CD4-positive, alpha-beta memory T cell (primary cell): ENCODE measurements at regions of chr19 and their contacts with region 1.

Region 1: DNA sequence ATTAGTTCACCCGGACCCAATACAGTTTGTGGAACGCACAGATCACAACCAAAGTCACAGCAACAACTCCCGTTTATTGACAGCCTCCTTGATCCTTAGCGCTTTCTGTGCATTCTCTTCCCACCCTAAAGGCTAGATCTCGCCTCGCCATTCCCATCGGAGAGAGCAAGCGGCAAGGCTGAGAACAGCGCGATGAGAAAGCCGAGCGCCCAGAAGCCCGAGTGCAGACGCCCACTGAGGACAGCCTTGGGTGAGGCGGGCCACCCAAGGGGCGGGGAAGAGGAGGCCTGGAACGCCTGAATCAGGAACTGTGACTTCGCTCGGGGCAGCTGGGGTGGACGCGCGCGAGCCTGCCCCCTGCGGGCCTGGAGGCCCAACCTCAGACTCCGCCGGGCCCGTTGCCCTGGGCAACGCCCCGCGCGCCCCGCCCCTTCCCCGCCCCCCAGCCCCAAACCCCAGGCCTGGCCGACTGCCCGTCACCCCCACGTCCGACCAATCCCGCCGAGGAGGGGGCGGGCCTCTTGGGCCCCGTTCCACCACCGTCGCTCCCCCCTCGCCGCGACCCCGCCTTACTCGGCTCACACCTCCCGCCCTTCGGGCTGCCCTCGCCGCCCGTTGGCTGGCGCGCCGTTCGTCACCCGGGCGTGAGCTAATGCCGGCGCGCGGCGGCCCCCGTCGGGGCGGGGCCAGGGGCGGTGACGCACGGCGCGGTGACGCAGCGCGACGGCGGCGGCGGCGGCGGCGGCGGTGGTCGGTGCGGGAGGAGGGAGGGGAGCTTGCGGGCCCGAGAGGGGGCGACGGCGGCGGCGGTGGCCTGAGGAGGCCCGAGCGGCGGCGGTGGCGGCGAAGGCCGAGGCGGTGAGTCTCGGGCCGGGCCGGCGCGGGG is at the start of gene SAMD4B:
- DNase-seq: peak; percentile 99 to 100 (median 99)
- H3K4me3 ChIP-seq: peak within 1 kb of the TSS; percentile 86 to 91
- H3K4me3 Mint-ChIP-seq: peak within 1 kb of the TSS; percentile 87 to 99 (median 94)
- H3K27ac ChIP-seq: peak within 1 kb of the TSS; percentile 78
- H3K27ac Mint-ChIP-seq: peak within 1 kb of the TSS; percentile 91 to 98 (median 95)
- H3K4me1 ChIP-seq: peaks cover 64% of the 10 kb centered on the region
- H3K4me1 Mint-ChIP-seq: peaks cover 50 to 77% (median 64%) of the 10 kb centered on the region in 4 donors
- H3K27me3 ChIP-seq: no peaks in the 10 kb centered on the region
- H3K27me3 Mint-ChIP-seq: no peaks in the 10 kb centered on the region
- total RNA-seq, gene SAMD4B: 65.0 to 79.6 TPM

Region 2: DNA sequence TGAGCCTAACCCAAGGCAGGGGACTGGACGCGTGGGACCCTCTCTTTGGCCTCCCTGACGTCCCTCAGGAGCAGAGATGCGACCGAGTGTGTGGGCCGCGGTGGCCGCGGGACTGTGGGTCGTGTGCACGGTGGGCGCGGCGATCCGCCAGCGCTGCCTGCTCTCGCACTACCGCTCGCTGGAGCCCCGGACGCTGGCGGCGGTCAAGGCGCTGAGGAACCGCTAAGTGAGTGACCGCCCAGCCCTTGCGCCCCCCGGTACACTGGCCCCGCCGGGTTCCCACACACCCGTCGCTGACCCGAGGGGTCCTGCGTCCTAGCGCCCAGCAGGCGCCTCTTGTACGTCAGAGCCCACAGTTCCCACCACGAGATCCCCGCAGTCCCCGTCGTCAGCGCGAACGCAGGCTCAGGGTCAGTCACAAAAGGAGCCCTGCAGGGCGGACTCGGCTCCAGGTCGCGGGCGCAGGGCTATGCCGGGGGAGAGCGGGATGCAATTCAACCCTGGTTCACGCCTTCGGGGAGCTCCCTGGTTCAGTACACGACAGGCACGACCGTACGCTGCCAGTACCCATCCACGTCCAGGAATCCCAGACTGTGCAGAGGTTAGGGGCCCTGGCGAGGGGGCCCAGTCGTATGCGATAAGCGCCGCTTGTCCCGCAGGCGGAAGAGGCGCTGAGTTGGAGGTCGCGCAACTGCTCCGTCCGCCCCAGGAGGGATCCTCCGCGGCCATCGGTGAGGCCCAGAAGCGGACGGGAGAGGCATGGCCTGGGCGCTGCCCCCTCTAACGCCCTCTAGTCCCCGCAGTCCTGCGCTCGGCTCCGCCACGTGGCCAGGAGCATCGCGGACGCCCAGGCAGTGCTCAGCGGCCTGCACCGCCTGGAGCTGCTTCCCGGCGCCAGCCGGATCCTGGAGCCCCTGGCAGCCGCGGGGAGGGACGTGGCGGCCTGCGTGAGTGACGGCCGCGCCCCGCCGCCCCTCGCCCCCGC is 77.4 kb before region 1 on chr19:
- CTCF ChIA-PET with region 1: no interaction called
- POLR2A ChIA-PET with region 1: no interaction called
- intact Hi-C with region 1: no loop called
- DNase-seq: no peak
- H3K4me3 ChIP-seq: no peak overlapping the region
- H3K4me3 Mint-ChIP-seq: peak overlapping the region in 1 of 8 donors; percentile 13
- H3K27ac ChIP-seq: no peak overlapping the region
- H3K27ac Mint-ChIP-seq: no peak overlapping the region
- H3K4me1 ChIP-seq: no peaks in the 10 kb centered on the region
- H3K4me1 Mint-ChIP-seq: peaks cover 3 to 8% (median 5%) of the 10 kb centered on the region in 4 donors
- H3K27me3 ChIP-seq: peaks cover 18% of the 10 kb centered on the region
- H3K27me3 Mint-ChIP-seq: peaks cover 21 to 24% of the 10 kb centered on the region in 2 donors

Region 3: GRCh38 chr19:39390755-39391592 is 49.0 kb after region 1 on chr19 and contains the starts of genes MED29 and PAF1:
- CTCF ChIA-PET with region 1: no interaction called
- POLR2A ChIA-PET with region 1: interaction called, 25 read pairs
- intact Hi-C with region 1: loop called (anchors 1 kb)
- DNase-seq: peak; percentile 96 to 99 (median 99)
- H3K4me3 ChIP-seq: peak within 1 kb of the TSS; percentile 71 to 93
- H3K4me3 Mint-ChIP-seq: peak within 1 kb of the TSS; percentile 90 to 99 (median 98)
- H3K27ac ChIP-seq: peak within 1 kb of the TSS; percentile 99
- H3K27ac Mint-ChIP-seq: peak within 1 kb of the TSS; percentile 93 to 100 (median 100)
- H3K4me1 ChIP-seq: peaks cover 26% of the 10 kb centered on the region
- H3K4me1 Mint-ChIP-seq: peaks cover 22 to 46% (median 33%) of the 10 kb centered on the region in 4 donors
- H3K27me3 ChIP-seq: no peaks in the 10 kb centered on the region
- H3K27me3 Mint-ChIP-seq: no peaks in the 10 kb centered on the region
- total RNA-seq, gene MED29: 43.1 to 51.3 TPM
- total RNA-seq, gene PAF1: 49.2 to 53.8 TPM

Region 4: GRCh38 chr19:39397360-39398296 is 55.7 kb after region 1 on chr19:
- CTCF ChIA-PET with region 1: no interaction called
- POLR2A ChIA-PET with region 1: interaction called, 13 read pairs
- intact Hi-C with region 1: no loop called
- DNase-seq: peak; percentile 90 to 91 (median 91)
- H3K4me3 ChIP-seq: peak overlapping the region in 1 of 2 donors; percentile 21
- H3K4me3 Mint-ChIP-seq: peak overlapping the region; percentile 57 to 70 (median 64)
- H3K27ac ChIP-seq: peak overlapping the region; percentile 72
- H3K27ac Mint-ChIP-seq: peak overlapping the region; percentile 94 to 100 (median 97)
- H3K4me1 ChIP-seq: peaks cover 58% of the 10 kb centered on the region
- H3K4me1 Mint-ChIP-seq: peaks cover 32 to 67% (median 53%) of the 10 kb centered on the region in 4 donors
- H3K27me3 ChIP-seq: no peaks in the 10 kb centered on the region
- H3K27me3 Mint-ChIP-seq: no peaks in the 10 kb centered on the region

Region 5: GRCh38 chr19:39406656-39407393 is 64.9 kb after region 1 on chr19 and contains the start of gene ZFP36:
- CTCF ChIA-PET with region 1: interaction called, 4 read pairs
- POLR2A ChIA-PET with region 1: interaction called, 19 read pairs
- intact Hi-C with region 1: loop called (anchors 1 kb)
- DNase-seq: peak; percentile 86 to 88 (median 87)
- H3K4me3 ChIP-seq: peak within 1 kb of the TSS; percentile 97 to 100
- H3K4me3 Mint-ChIP-seq: peak within 1 kb of the TSS; percentile 88 to 99 (median 97)
- H3K27ac ChIP-seq: peak within 1 kb of the TSS; percentile 100
- H3K27ac Mint-ChIP-seq: peak within 1 kb of the TSS; percentile 99 to 100 (median 100)
- H3K4me1 ChIP-seq: peaks cover 66% of the 10 kb centered on the region
- H3K4me1 Mint-ChIP-seq: peaks cover 38 to 95% (median 55%) of the 10 kb centered on the region in 4 donors
- H3K27me3 ChIP-seq: no peaks in the 10 kb centered on the region
- H3K27me3 Mint-ChIP-seq: peaks cover 0 to 2% of the 10 kb centered on the region in 2 donors
- total RNA-seq, gene ZFP36: 151 to 152 TPM

Region 6: DNA sequence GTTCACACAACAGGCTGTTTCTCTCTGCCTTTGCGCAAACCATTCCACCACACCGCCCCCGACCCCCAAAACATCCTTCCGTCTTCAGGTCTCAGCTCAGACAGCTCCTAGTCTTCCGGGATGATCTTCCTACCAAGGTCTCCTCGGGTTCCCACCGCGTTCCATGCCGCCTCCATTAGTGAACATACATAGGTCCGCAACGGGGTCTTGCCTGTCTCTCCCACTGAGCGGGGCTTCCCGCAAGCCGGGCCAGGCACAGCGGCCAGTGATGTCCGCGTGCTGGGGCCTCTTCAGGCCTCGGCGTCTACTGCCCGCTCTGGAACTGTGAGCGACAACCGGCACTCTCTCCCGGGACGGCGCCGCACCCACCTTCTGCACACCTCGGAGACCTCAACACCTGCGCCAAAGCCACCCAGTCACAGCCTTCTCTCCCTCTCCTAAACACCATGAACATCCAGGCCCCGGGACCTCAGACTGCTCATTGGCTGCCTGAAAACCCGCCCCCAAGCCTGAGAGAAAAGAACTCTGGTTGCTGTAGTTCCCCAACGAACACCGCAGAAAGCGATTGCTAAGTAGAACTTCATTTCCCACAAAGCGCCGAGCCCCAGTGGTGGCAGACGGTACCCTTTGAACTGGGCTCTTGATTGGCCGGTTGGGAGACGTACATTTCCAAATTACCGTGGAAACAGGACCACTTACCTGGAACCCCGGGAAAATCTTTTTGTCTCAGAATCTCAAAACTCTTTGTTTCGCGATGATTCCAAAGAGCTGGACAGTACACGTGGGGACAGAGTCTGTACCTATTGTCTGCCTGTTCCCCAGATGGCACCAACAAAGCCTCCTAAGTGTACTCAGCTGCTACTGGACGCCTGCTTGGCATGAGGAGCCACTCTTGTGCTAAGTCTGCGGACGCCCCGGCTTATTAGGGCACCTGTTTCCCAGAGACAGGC is 482.5 kb after region 1 on chr19:
- CTCF ChIA-PET with region 1: no interaction called
- POLR2A ChIA-PET with region 1: no interaction called
- intact Hi-C with region 1: loop called (anchors 5 kb)
- DNase-seq: peak; percentile 86 to 95 (median 88)
- H3K4me3 ChIP-seq: peak overlapping the region; percentile 67 to 85
- H3K4me3 Mint-ChIP-seq: no peak overlapping the region
- H3K27ac ChIP-seq: peak overlapping the region; percentile 60
- H3K27ac Mint-ChIP-seq: no peak overlapping the region
- H3K4me1 ChIP-seq: peaks cover 24% of the 10 kb centered on the region
- H3K4me1 Mint-ChIP-seq: peaks cover 7 to 16% (median 8%) of the 10 kb centered on the region in 4 donors
- H3K27me3 ChIP-seq: no peaks in the 10 kb centered on the region
- H3K27me3 Mint-ChIP-seq: no peaks in the 10 kb centered on the region